ENCODE measurements at regions of chr5 and their contacts with region 1.

Region 1: DNA sequence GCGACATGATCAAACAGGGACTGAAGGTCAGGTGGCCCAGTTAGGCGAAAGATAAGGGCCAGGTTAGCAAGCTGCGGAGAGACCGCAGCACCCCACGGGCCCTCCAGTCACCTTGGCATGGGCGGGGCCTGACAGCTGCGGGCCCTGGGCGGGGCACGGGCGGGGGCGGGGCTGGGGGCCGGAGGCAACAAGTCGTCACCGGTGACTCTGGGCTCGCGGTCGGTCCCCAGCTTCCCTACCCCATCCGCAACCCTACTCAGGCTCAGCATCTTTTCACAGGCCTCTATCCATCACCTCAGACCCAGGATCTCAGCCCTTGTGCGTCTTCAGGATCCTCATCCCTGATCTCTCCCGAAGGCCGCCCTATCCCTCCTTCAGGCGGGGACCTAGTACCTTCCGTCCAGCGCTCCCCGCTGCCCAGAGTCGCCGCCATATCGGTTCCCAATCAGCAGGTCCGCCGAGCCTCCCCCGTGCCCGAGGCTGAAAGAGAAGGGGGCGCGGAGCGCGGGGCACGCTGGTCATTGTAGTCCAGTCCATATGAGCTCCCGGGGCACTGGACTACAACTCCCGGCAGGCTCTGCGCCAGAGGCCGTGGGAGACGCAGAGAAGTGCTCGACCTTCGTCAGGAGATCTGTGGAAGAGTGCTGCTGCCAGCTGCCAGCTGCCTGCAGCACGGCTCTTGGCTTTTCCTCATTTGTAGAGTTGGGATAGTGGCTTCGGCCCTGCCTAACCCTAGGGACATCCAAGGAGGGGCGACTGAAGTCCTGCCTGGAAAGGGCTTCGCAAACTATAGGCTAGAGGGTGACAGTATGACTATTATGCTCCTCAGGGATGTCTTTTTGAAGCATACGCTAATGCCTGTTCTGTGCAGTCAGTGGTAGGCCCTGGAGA is at the start of gene DNAJC18:
- DNase-seq: peak; percentile 87
- ATAC-seq: peak; percentile 95
- H3K4me3 Mint-ChIP-seq: peak within 1 kb of the TSS; percentile 99
- H3K27ac Mint-ChIP-seq: peak within 1 kb of the TSS; percentile 99
- H3K4me1 Mint-ChIP-seq: peaks cover 12% of the 10 kb centered on the region
- H3K27me3 Mint-ChIP-seq: no peaks in the 10 kb centered on the region
- CTCF ChIP-seq: no peak
- total RNA-seq, gene DNAJC18: 9.1 and 9.6 TPM in 2 replicates

Region 2: DNA sequence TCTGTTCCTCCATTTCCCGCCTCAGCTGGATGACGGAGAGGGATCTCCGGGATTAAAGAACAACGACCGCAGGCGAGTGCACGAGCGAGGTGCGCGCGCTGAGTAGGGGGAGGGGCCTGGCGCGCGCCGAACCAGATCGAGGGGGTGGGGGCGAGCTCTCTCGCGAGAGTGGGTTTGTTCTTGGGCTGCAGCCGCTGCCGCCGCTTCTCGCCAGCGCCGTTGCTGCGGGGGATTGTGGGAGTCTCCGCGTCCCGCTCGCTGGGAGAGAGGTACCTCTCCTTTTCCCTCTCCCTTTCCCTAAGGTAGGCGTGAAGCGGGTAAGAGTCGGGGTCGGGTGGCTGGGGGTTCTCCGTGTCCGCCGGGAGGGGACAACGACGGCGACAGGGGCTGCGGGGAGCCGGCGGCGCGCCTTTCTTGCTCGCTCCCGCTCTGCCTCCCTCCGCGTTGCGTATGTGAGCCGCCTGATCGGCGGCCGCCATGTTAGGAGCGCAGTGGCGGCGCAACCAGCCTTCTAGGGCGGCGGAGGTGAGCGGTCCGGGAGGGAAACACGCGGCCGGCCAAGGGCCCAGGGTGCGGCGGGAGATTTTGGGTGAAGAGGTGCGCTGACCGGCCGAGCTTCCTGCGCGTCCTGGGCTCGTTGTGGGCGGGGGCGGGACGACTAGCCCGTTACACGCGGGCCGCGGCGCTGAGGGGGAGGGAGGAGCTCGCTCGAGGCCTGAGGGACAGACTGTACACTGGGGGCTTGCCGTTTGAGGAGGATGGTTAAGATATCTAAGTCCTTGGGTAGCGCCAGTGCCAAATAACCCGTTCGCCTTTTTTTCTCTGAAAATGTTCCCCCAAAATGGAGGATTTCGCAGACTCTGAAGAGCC is 145.5 kb before region 1 on chr5 and contains the start of gene MATR3:
- CTCF ChIA-PET with region 1: no interaction called
- POLR2A ChIA-PET with region 1: interaction called, 5 read pairs
- intact Hi-C with region 1: loop called (anchors 1 kb)
- DNase-seq: peak; percentile 87
- ATAC-seq: peak; percentile 90
- H3K4me3 Mint-ChIP-seq: peak within 1 kb of the TSS; percentile 97
- H3K27ac Mint-ChIP-seq: peak within 1 kb of the TSS; percentile 96
- H3K4me1 Mint-ChIP-seq: peaks cover 48% of the 10 kb centered on the region
- H3K27me3 Mint-ChIP-seq: no peaks in the 10 kb centered on the region
- CTCF ChIP-seq: no peak
- total RNA-seq, gene MATR3: 242 and 294 TPM in 2 replicates

Region 3: GRCh38 chr5:139385061-139386049 is 53.9 kb before region 1 on chr5:
- CTCF ChIA-PET with region 1: no interaction called
- POLR2A ChIA-PET with region 1: no interaction called
- intact Hi-C with region 1: no loop called
- DNase-seq: no peak
- ATAC-seq: no peak
- H3K4me3 Mint-ChIP-seq: peak overlapping the region; percentile 60
- H3K27ac Mint-ChIP-seq: peak overlapping the region; percentile 95
- H3K4me1 Mint-ChIP-seq: peaks cover 85% of the 10 kb centered on the region
- H3K27me3 Mint-ChIP-seq: no peaks in the 10 kb centered on the region
- CTCF ChIP-seq: no peak

Region 4: DNA sequence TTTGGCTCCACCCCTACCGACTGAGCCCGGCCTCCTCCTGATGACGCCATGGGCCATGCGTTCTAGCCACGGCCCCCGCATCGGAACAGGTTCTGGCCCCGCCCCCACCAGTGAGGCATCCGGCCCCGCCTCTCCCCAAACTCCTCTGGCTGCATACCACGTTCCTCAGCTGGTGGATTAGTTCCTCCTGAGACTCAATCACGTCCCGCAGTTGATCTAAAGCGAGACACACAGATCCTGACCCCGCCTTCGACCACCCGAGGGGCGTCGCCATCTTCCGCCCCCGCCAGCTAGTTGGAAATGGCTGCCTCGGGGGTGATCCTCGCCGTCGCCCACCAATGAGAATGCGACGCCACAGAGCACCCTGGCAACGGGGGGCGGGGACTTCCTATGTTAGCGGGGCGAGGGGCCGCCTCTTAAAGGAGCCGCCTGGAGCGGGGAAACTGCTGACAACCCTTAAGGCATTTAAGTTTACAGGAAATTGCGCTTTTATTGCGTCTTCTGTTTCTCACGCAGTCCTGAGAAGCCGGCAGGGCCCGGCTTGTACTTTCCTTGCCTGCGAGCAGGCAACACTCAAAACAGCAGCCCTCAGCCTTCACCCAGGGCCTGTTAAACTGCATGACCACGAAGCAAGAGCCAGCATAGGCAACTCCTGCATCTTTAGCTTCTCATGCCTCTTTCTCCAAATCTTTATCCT is 35.3 kb before region 1 on chr5 and contains the start of gene SPATA24:
- CTCF ChIA-PET with region 1: no interaction called
- POLR2A ChIA-PET with region 1: interaction called, 3 read pairs
- intact Hi-C with region 1: loop called (anchors 1 kb)
- DNase-seq: peak; percentile 93
- ATAC-seq: peak; percentile 84
- H3K4me3 Mint-ChIP-seq: peak within 1 kb of the TSS; percentile 90
- H3K27ac Mint-ChIP-seq: peak within 1 kb of the TSS; percentile 96
- H3K4me1 Mint-ChIP-seq: peaks cover 53% of the 10 kb centered on the region
- H3K27me3 Mint-ChIP-seq: no peaks in the 10 kb centered on the region
- CTCF ChIP-seq: no peak
- total RNA-seq, gene SPATA24: 6.4 and 9.3 TPM in 2 replicates

Region 5: GRCh38 chr5:139458580-139459406 is 19.5 kb after region 1 on chr5:
- CTCF ChIA-PET with region 1: no interaction called
- POLR2A ChIA-PET with region 1: interaction called, 5 read pairs
- intact Hi-C with region 1: loop called (anchors 2 kb)
- DNase-seq: no peak
- ATAC-seq: peak; percentile 61
- H3K4me3 Mint-ChIP-seq: no peak overlapping the region
- H3K27ac Mint-ChIP-seq: no peak overlapping the region
- H3K4me1 Mint-ChIP-seq: peaks cover 14% of the 10 kb centered on the region
- H3K27me3 Mint-ChIP-seq: no peaks in the 10 kb centered on the region
- CTCF ChIP-seq: no peak

Region 6: DNA sequence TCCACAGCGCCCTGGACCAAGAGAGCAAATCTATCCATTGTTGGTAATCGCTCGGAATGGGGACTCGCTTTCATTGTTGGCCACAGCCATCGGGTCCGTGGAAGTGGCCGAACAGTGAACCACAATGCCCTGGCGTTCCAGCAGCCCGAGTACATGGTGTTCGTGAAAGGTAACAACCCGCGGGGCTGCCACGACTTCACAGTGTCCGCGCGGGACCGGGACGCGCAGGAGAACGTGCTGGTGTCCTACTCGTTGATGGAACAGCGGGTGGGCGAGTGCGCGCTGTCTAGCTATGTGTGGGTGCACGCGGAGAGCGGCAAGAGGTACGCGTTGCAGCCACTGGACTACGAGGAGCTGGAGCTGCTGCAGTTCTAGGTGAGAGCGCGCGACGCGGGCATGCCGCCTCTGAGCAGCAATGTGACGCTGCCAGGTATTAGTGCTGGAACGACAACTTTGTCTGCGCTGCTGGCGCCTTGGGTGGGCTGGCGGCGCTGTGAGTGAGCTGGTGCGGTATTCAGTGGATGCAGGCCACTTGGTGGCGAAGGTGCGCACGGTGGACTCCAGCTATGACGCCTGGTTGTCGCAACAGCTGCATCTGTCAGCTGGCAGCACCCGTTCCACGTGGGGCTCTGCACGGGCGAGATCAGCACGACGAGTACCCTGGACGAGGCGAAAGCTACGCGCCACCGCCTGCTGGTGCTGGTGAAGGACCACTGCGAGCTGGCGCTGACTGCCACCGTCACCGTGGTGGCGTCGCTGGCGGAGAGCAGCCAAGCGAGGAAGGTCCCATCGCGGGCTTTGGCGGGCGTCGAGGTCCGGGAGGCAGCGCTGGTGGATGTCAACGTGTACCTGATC is 1423.4 kb after region 1 on chr5:
- CTCF ChIA-PET with region 1: no interaction called
- POLR2A ChIA-PET with region 1: no interaction called
- intact Hi-C with region 1: no loop called
- DNase-seq: no peak
- ATAC-seq: no peak
- H3K4me3 Mint-ChIP-seq: no peak overlapping the region
- H3K27ac Mint-ChIP-seq: no peak overlapping the region
- H3K4me1 Mint-ChIP-seq: no peaks in the 10 kb centered on the region
- H3K27me3 Mint-ChIP-seq: peaks cover 5% of the 10 kb centered on the region
- CTCF ChIP-seq: no peak